ENCODE measurements at regions of chr17 and their contacts with region 1.

Region 1: GRCh38 chr17:10115071-10115539 is 83.3 kb downstream of the GAS7 start:
- DNase-seq: peak in 13 of 14 experiments; percentile 20 to 87 (median 57)
- ATAC-seq: peak; percentile 77
- H3K4me3 ChIP-seq: peak overlapping the region; percentile 35
- H3K4me3 Mint-ChIP-seq: peak overlapping the region; percentile 51
- H3K27ac ChIP-seq: peak overlapping the region; percentile 61 to 87
- H3K27ac Mint-ChIP-seq: peak overlapping the region; percentile 88
- H3K4me1 ChIP-seq: peaks cover 62% of the 10 kb centered on the region
- H3K4me1 Mint-ChIP-seq: peaks cover 59% of the 10 kb centered on the region
- H3K27me3 ChIP-seq: no peaks in the 10 kb centered on the region
- H3K27me3 Mint-ChIP-seq: peaks cover 4% of the 10 kb centered on the region
- CTCF ChIP-seq: no peak

Region 2: GRCh38 chr17:10059369-10060211 is 55.5 kb before region 1 on chr17:
- CTCF ChIA-PET with region 1: no interaction called
- POLR2A ChIA-PET with region 1: no interaction called
- intact Hi-C with region 1: loop called in 1 of 2 experiments (anchors 10 kb)
- DNase-seq: peak in 2 of 14 experiments; percentile 21 to 24
- ATAC-seq: no peak
- H3K4me3 ChIP-seq: no peak overlapping the region
- H3K4me3 Mint-ChIP-seq: no peak overlapping the region
- H3K27ac ChIP-seq: no peak overlapping the region
- H3K27ac Mint-ChIP-seq: no peak overlapping the region
- H3K4me1 ChIP-seq: no peaks in the 10 kb centered on the region
- H3K4me1 Mint-ChIP-seq: no peaks in the 10 kb centered on the region
- H3K27me3 ChIP-seq: no peaks in the 10 kb centered on the region
- H3K27me3 Mint-ChIP-seq: no peaks in the 10 kb centered on the region
- CTCF ChIP-seq: no peak

Region 3: DNA sequence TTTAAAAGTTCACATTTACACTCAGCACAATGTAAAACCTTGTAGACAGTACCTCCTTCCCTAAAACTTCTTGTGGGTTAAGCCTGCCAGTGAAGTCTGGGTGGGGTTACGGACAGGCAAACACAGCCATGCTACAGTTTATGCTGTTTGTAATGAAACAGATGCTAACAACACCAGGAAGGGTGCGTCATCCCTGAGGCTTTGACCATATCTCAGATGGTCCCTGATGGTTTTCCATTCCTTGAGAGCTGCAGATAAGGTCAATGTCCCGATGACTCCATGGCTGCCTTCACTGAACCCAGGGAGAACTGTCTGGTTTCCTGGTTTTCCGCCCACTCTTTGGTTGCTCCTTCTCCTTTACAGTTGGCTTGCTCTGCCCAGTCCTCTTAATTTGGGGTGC is 54.2 kb after region 1 on chr17:
- CTCF ChIA-PET with region 1: no interaction called
- POLR2A ChIA-PET with region 1: no interaction called
- intact Hi-C with region 1: loop called in 1 of 2 experiments (anchors 5 kb)
- DNase-seq: no peak
- ATAC-seq: no peak
- H3K4me3 ChIP-seq: no peak overlapping the region
- H3K4me3 Mint-ChIP-seq: no peak overlapping the region
- H3K27ac ChIP-seq: no peak overlapping the region
- H3K27ac Mint-ChIP-seq: no peak overlapping the region
- H3K4me1 ChIP-seq: peaks cover 3% of the 10 kb centered on the region
- H3K4me1 Mint-ChIP-seq: peaks cover 20% of the 10 kb centered on the region
- H3K27me3 ChIP-seq: peaks cover 0 to 2% of the 10 kb centered on the region in 2 experiments
- H3K27me3 Mint-ChIP-seq: peaks cover 21% of the 10 kb centered on the region
- CTCF ChIP-seq: no peak

Region 4: DNA sequence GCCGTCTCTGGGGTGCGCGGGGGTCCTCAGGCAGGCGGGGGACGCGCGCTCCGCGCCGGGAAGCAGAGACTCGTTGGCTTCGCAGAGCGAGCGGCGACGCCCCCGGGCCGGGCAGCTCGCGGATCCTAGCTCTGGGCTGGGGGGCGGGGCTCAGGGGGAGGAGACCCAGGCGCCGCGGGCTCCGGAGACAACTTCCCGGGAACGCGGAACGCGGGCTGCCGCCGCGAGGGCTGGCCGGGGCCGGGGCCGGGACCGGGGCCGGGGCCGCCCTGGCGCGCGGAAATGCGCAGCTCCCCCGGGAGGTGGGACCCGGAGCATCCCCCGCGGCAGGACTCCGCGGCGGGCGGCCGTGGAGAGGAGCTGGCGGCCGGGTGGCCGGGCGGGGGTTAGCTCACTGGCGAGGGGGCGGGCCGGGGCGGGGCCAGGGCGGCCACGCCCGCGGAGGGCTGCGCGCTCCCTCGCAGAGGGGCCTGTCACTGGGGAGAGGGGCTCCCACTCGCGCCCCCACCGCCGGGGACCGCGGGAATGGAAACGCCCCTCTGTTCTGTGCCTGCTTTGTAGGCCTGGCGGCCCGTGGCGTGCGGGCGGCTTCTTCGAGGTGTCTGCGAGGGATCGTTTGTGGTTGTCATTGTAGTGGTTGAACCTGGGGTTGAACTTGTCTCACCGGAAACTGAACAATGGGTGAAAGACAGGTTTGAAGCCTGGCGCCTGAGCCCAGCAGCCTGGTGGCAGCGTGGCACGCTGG is 83.6 kb after region 1 on chr17 and contains the start of gene GAS7:
- CTCF ChIA-PET with region 1: no interaction called
- POLR2A ChIA-PET with region 1: interaction called, 4 read pairs
- intact Hi-C with region 1: loop called in 1 of 2 experiments (anchors 5 kb)
- DNase-seq: peak in 10 of 14 experiments; percentile 1 to 72 (median 36)
- ATAC-seq: peak; percentile 73
- H3K4me3 ChIP-seq: peak within 1 kb of the TSS; percentile 28
- H3K4me3 Mint-ChIP-seq: peak within 1 kb of the TSS; percentile 61
- H3K27ac ChIP-seq: no peak within 1 kb of the TSS
- H3K27ac Mint-ChIP-seq: no peak within 1 kb of the TSS
- H3K4me1 ChIP-seq: peaks cover 6% of the 10 kb centered on the region
- H3K4me1 Mint-ChIP-seq: peaks cover 10% of the 10 kb centered on the region
- H3K27me3 ChIP-seq: peaks cover 4 to 5% of the 10 kb centered on the region in 2 experiments
- H3K27me3 Mint-ChIP-seq: peaks cover 37% of the 10 kb centered on the region
- CTCF ChIP-seq: no peak
- total RNA-seq, gene GAS7: 1.8 to 3.4 TPM

Region 5: DNA sequence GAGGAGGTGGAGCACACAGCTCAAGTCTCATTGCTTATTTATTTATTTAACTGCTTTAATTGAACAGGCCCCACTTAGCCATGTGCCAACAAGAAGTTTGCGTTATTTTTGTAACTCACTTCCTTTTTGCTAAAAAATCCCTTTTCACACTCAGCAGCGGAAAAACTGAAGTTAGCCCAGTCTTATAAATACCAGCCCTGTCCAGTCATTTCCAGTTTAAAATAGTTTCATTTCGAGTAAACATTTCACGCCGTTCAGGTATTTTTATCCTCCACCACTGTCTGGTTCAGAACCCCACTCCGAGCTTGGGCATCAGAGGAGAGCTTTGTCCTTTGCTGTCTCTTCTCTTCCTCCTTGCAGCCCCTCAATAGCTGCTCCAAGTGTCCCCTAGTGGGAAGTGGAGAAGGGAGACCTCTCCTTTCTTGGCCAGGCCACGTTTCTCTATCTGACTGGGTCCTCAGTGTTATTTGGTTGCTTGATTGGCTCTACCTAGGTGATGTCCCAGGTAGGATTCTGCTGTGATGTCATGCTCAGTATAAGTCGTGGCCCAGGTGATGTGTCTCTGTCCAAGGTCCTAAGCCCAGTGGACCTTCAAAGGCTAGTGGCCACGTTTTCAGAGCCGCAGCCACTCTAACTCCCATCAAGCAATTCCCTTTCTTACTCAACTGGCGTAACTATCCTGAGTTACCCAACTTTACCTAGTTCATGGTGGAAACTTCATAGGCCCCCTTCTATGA is 136.3 kb after region 1 on chr17:
- CTCF ChIA-PET with region 1: no interaction called
- POLR2A ChIA-PET with region 1: no interaction called
- intact Hi-C with region 1: no loop called
- DNase-seq: no peak
- ATAC-seq: no peak
- H3K4me3 ChIP-seq: no peak overlapping the region
- H3K4me3 Mint-ChIP-seq: no peak overlapping the region
- H3K27ac ChIP-seq: no peak overlapping the region
- H3K27ac Mint-ChIP-seq: no peak overlapping the region
- H3K4me1 ChIP-seq: no peaks in the 10 kb centered on the region
- H3K4me1 Mint-ChIP-seq: no peaks in the 10 kb centered on the region
- H3K27me3 ChIP-seq: no peaks in the 10 kb centered on the region
- H3K27me3 Mint-ChIP-seq: peaks cover 10% of the 10 kb centered on the region
- CTCF ChIP-seq: no peak

Measured in CD4-positive, alpha-beta T cell (primary cell).